ENCODE measurements at regions of chr16 and their contacts with region 1.

Region 1: GRCh38 chr16:55035029-55035428 is 104.4 kb downstream of the IRX5 start:
- DNase-seq: peak; percentile 73
- H3K4me3 ChIP-seq: 0 out of 4 replicates have a peak overlapping the region, but pooled peaks of 1 of the 2 experiments have one; percentile 32
- H3K27ac ChIP-seq: no peak overlapping the region
- H3K4me1 ChIP-seq: peaks cover 0 to 5% of the 10 kb centered on the region in 2 experiments; a peak in 2 of 4 replicates
- H3K27me3 ChIP-seq: no peaks in the 10 kb centered on the region
- CTCF ChIP-seq: peak; percentile 52
- EP300 ChIP-seq: no peak
- RAD21 ChIP-seq: peak; percentile 68

Region 2: GRCh38 chr16:54657058-54657708 is 377.8 kb before region 1 on chr16:
- CTCF ChIA-PET with region 1: no interaction called
- POLR2A ChIA-PET with region 1: no interaction called
- DNase-seq: no peak
- H3K4me3 ChIP-seq: no peak overlapping the region
- H3K27ac ChIP-seq: no peak overlapping the region
- H3K4me1 ChIP-seq: no peaks in the 10 kb centered on the region
- H3K27me3 ChIP-seq: no peaks in the 10 kb centered on the region; the same call in 1 of the 2 replicates
- CTCF ChIP-seq: no peak
- EP300 ChIP-seq: no peak
- RAD21 ChIP-seq: no peak

Region 3: GRCh38 chr16:55021595-55022475 is 13.2 kb before region 1 on chr16:
- CTCF ChIA-PET with region 1: interaction called, 20 read pairs
- POLR2A ChIA-PET with region 1: no interaction called
- DNase-seq: no peak
- H3K4me3 ChIP-seq: no peak overlapping the region
- H3K27ac ChIP-seq: no peak overlapping the region
- H3K4me1 ChIP-seq: peaks cover 0 to 12% of the 10 kb centered on the region in 2 experiments; a peak in 1 of 4 replicates
- H3K27me3 ChIP-seq: no peaks in the 10 kb centered on the region
- CTCF ChIP-seq: 0 out of 2 replicates have a peak, but pooled peaks have one; percentile 14
- EP300 ChIP-seq: no peak
- RAD21 ChIP-seq: no peak

Region 4: GRCh38 chr16:55048745-55049144 is 13.7 kb after region 1 on chr16:
- CTCF ChIA-PET with region 1: interaction called, 15 read pairs
- POLR2A ChIA-PET with region 1: no interaction called
- DNase-seq: no peak
- H3K4me3 ChIP-seq: no peak overlapping the region
- H3K27ac ChIP-seq: no peak overlapping the region
- H3K4me1 ChIP-seq: peaks cover 0 to 5% of the 10 kb centered on the region in 2 experiments; a peak in 1 of 4 replicates
- H3K27me3 ChIP-seq: no peaks in the 10 kb centered on the region
- CTCF ChIP-seq: no peak
- EP300 ChIP-seq: no peak
- RAD21 ChIP-seq: no peak